MCF 10A (cell line): ENCODE measurements at regions of chr17 and their contacts with region 1.

Region 1: GRCh38 chr17:5181509-5182305 is 10.0 kb downstream of the ZNF594 start:
- DNase-seq: no peak
- H3K4me3 Mint-ChIP-seq: no peak overlapping the region
- H3K27ac Mint-ChIP-seq: no peak overlapping the region
- H3K4me1 Mint-ChIP-seq: no peaks in the 10 kb centered on the region
- H3K27me3 Mint-ChIP-seq: no peaks in the 10 kb centered on the region
- CTCF ChIP-seq: no peak

Region 2: DNA sequence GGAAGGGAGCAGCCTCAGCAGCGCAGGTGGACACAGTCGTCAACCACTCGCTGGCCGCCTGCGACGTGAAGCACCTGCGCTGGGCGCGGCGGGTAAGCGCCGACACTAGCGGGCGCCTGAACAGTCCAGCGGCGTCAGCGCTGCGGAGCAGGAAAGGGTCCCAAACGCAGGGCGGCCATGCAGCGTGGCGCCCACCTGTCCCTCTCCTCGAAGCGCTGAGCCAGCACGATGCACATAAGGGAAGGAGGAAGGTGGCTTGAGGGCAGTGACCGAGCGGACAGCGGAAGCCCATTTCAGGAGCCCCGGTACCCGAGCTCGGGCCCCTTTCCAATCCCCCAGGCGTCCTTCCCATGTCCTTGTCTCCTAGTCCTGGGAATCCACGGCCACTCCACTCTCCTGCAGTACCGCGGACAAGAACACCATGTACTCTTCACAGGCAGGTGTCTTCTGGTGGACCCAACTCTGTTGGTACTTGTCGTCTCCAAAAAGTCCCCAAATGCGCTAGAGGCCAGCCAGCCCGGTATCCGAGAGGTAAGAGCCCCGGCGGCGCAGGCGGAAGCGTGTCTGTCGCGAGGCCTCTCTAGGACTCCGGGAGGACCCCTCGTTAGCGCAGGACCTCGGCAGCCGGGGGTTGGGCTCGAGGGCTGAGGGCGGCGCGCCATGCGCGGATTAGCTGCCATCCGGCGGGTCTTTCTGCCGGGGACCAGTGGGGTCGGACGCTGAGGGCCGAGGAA is 84.4 kb before region 1 on chr17:
- CTCF ChIA-PET with region 1: no interaction called
- POLR2A ChIA-PET with region 1: no interaction called
- intact Hi-C with region 1: no loop called
- DNase-seq: no peak
- H3K4me3 Mint-ChIP-seq: no peak overlapping the region
- H3K27ac Mint-ChIP-seq: no peak overlapping the region
- H3K4me1 Mint-ChIP-seq: no peaks in the 10 kb centered on the region
- H3K27me3 Mint-ChIP-seq: no peaks in the 10 kb centered on the region
- CTCF ChIP-seq: no peak

Region 3: GRCh38 chr17:5110816-5111215 is 70.9 kb before region 1 on chr17:
- CTCF ChIA-PET with region 1: no interaction called
- POLR2A ChIA-PET with region 1: no interaction called
- intact Hi-C with region 1: no loop called
- DNase-seq: no peak
- H3K4me3 Mint-ChIP-seq: peak overlapping the region; percentile 93
- H3K27ac Mint-ChIP-seq: peak overlapping the region; percentile 54
- H3K4me1 Mint-ChIP-seq: peaks cover 7% of the 10 kb centered on the region
- H3K27me3 Mint-ChIP-seq: no peaks in the 10 kb centered on the region
- CTCF ChIP-seq: no peak

Region 4: DNA sequence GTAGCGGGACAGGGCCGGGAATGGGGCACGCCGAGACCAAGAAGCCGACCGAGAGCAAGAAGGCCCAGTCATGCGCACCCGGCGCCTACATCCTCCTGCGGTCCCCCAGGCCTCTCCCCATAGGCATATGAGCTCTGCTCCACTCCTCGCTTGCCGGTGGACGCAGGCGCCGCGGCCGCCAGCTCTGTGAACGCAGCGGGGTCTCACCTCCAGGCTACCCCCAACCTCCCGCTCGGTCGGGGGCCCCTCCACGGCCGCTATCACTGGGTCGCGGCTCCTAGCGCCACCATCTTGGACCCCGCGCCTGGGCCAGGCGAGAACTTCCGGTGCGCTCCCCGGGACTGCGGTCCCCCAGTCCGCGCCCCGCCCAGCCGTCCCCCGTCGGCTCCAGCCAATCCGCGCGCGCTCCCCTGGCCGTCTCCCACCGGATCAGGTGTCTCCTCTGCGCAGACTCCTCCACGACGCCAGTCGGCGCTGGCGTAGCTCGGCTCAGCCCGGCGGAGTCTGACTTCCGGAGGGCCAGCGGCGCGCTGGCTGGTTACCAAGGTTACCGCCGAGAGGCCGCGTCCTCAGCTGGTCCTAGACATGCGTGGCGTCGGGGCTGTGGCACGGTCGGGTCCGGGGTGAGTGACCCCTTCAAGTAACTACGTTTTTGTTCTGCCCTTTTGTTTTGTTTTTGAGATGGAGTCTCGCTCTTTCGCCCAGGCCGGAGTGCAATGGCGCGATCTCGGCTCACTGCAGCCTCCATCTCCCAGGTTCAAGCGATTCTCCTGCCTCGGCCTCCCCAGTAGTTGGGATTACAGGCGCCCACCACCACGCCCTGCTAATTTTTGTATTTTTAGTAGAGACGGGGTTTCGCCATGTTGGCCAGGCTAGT is 10.1 kb after region 1 on chr17 and contains the start of gene ZNF594:
- CTCF ChIA-PET with region 1: interaction called, 11 read pairs
- POLR2A ChIA-PET with region 1: no interaction called
- intact Hi-C with region 1: no loop called
- DNase-seq: peak; percentile 62
- H3K4me3 Mint-ChIP-seq: peak within 1 kb of the TSS; percentile 86
- H3K27ac Mint-ChIP-seq: peak within 1 kb of the TSS; percentile 64
- H3K4me1 Mint-ChIP-seq: no peaks in the 10 kb centered on the region
- H3K27me3 Mint-ChIP-seq: no peaks in the 10 kb centered on the region
- CTCF ChIP-seq: peak; percentile 37
- total RNA-seq, gene ZNF594: 1.9 TPM in 2 replicates

Region 5: DNA sequence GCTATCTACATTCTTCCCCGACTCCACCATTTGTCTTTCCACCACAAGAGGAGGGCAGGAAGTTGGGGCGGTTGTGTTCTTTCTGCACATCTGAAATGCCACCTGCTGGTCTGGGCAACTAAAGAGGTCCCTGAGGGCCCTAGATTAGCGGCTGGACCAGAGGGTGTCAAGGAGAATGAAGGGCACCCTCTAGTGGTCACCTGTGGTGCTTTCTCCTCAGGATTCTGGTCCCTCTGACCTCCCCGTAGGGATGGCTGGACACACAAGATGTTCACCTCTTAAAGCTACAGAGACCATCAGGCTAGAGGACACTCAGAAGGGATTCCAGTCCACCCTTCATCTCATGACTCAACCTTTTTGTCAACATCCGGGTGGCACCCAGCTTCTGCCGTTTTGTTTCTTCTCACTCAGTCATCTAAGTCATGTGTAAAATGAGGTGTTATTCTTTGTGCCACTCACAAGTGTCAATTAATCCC is 55.9 kb after region 1 on chr17:
- CTCF ChIA-PET with region 1: no interaction called
- POLR2A ChIA-PET with region 1: no interaction called
- intact Hi-C with region 1: no loop called
- DNase-seq: peak; percentile 83
- H3K4me3 Mint-ChIP-seq: no peak overlapping the region
- H3K27ac Mint-ChIP-seq: no peak overlapping the region
- H3K4me1 Mint-ChIP-seq: no peaks in the 10 kb centered on the region
- H3K27me3 Mint-ChIP-seq: no peaks in the 10 kb centered on the region
- CTCF ChIP-seq: peak; percentile 54

Region 6: GRCh38 chr17:5254903-5255526 is 73.3 kb after region 1 on chr17:
- CTCF ChIA-PET with region 1: no interaction called
- POLR2A ChIA-PET with region 1: no interaction called
- intact Hi-C with region 1: no loop called
- DNase-seq: no peak
- H3K4me3 Mint-ChIP-seq: no peak overlapping the region
- H3K27ac Mint-ChIP-seq: peak overlapping the region; percentile 10
- H3K4me1 Mint-ChIP-seq: no peaks in the 10 kb centered on the region
- H3K27me3 Mint-ChIP-seq: no peaks in the 10 kb centered on the region
- CTCF ChIP-seq: no peak